Endothelial cell of umbilical vein (primary cell): ENCODE measurements at regions of chr12 and their contacts with region 1.

Region 1: GRCh38 chr12:62192180-62192902 is 67.9 kb upstream of the USP15 start:
- DNase-seq: peak; percentile 85
- H3K4me3 ChIP-seq: peak overlapping the region in 2 of 3 experiments; percentile 22 to 37
- H3K27ac ChIP-seq: no peak overlapping the region
- H3K4me1 ChIP-seq: peaks cover 12% of the 10 kb centered on the region
- H3K27me3 ChIP-seq: peaks cover 33 to 65% of the 10 kb centered on the region in 2 experiments
- CTCF ChIP-seq: peak; percentile 46 to 64
- POLR2A ChIP-seq: no peak

Region 2: DNA sequence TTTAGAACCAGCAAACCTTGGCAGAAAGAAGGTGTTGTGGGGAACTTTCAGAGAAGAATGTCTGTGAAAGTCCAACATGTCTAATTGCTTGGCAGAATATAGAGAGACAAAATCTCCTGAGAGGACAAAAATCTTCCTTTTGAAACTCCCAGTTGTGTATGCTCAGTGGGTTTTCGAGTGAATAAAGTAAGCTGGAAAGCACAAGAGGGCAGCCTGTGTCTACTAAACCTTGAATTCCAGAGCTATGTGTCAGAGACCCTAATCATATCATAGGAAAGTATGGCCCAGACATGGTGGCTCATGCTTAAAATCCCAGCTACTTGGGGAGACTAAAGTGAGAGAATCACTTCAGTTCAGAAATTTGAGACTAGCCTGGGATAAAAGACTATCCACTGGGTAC is 1935.3 kb before region 1 on chr12:
- CTCF ChIA-PET with region 1: no interaction called
- POLR2A ChIA-PET with region 1: no interaction called
- dilution Hi-C with region 1: no loop called
- intact Hi-C with region 1: loop called (anchors 5 kb)
- DNase-seq: peak; percentile 82
- H3K4me3 ChIP-seq: no peak overlapping the region
- H3K27ac ChIP-seq: no peak overlapping the region
- H3K4me1 ChIP-seq: no peaks in the 10 kb centered on the region
- H3K27me3 ChIP-seq: no peaks in the 10 kb centered on the region
- CTCF ChIP-seq: peak; percentile 14 to 33
- POLR2A ChIP-seq: no peak

Region 3: DNA sequence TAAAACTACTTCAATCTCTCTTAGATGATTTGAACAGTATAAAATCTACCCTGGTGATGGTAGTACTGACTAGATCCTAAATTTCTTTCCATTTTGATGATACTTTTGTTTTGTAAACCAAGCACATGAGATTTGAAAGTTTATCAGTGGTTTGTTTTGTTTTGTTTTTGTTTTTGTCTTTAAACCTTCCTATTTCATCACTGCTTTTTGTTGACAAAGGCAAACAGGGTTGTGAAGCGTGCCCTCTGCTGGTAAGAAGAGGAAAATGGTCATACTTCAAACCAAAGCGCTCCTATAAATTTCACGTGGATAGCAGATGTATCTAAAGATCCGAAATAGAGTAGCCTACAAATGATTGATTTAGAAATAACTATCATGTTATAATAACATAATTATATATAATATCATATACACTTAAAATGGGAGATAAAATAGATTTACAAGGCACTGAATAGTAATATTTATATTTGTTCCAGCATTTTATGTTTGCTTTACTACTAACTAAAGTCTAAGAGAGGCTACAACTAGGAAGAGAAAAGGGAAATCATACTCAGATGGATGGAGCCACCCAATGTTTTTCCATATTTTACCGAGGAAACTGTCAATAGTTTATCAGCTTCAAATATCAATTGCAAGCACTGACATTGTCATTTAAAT is 186.1 kb before region 1 on chr12:
- CTCF ChIA-PET with region 1: interaction called, 3 read pairs
- POLR2A ChIA-PET with region 1: no interaction called
- dilution Hi-C with region 1: no loop called
- intact Hi-C with region 1: loop called (anchors 1 kb)
- DNase-seq: peak; percentile 42
- H3K4me3 ChIP-seq: no peak overlapping the region
- H3K27ac ChIP-seq: no peak overlapping the region
- H3K4me1 ChIP-seq: no peaks in the 10 kb centered on the region
- H3K27me3 ChIP-seq: no peaks in the 10 kb centered on the region
- CTCF ChIP-seq: peak; percentile 48 to 61
- POLR2A ChIP-seq: no peak

Region 4: DNA sequence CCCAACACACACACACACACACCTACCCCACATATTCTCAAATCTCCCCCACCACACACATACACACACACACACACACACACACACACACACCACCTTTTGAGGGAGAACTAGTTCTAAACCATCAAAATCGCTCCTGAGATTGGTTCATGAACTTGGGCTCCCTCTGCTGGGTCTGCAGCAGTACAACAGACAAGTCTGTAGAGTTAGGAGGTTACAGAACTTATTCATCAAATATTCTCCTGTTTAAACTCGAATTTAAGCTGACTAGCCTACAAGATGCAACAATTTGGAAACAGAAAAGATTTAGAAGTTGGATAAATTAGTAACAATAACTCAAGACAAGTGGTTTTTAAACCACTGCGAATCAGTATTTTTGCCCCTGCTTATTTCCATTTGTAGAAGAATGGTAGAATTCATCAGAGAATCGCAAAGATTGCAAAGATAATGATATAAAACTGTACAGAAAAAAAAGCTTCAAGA is 68.6 kb before region 1 on chr12:
- CTCF ChIA-PET with region 1: interaction called, 4 read pairs
- POLR2A ChIA-PET with region 1: no interaction called
- dilution Hi-C with region 1: no loop called
- intact Hi-C with region 1: loop called (anchors 2 kb)
- DNase-seq: peak; percentile 31
- H3K4me3 ChIP-seq: no peak overlapping the region
- H3K27ac ChIP-seq: no peak overlapping the region
- H3K4me1 ChIP-seq: peaks cover 7% of the 10 kb centered on the region
- H3K27me3 ChIP-seq: peaks cover 7 to 30% of the 10 kb centered on the region in 2 experiments
- CTCF ChIP-seq: peak; percentile 62 to 74
- POLR2A ChIP-seq: no peak

Region 5: DNA sequence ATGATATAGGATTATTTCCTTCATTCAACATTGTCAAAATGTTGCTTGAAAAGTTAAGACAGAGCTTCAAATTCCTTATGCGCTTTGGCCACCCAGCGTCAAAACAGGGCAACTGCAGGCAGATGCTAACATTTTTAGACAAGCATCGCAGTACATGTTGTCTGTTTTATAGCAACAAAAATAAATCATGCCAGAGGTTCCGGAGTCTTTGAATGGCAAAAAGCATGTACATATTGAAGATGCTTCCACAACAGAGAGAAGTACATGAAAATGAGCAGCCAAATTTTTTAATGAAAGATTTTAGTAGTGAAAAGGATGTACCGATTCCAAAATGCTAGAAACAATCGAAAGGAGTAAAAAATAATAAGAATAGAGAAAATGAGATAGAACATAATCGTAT is 18.1 kb after region 1 on chr12:
- CTCF ChIA-PET with region 1: interaction called, 12 read pairs
- POLR2A ChIA-PET with region 1: no interaction called
- dilution Hi-C with region 1: no loop called
- intact Hi-C with region 1: no loop called
- DNase-seq: peak; percentile 39
- H3K4me3 ChIP-seq: no peak overlapping the region
- H3K27ac ChIP-seq: no peak overlapping the region
- H3K4me1 ChIP-seq: no peaks in the 10 kb centered on the region
- H3K27me3 ChIP-seq: peaks cover 1 to 2% of the 10 kb centered on the region in 2 experiments
- CTCF ChIP-seq: peak; percentile 64 to 69
- POLR2A ChIP-seq: no peak